ENCODE measurements at regions of chr2 and their contacts with region 1.

Region 1: GRCh38 chr2:69816923-69817542 is 12.4 kb upstream of the GMCL1 start:
- DNase-seq: peak; percentile 41
- H3K4me3 ChIP-seq: no peak overlapping the region
- CTCF ChIP-seq: peak; percentile 61

Region 2: DNA sequence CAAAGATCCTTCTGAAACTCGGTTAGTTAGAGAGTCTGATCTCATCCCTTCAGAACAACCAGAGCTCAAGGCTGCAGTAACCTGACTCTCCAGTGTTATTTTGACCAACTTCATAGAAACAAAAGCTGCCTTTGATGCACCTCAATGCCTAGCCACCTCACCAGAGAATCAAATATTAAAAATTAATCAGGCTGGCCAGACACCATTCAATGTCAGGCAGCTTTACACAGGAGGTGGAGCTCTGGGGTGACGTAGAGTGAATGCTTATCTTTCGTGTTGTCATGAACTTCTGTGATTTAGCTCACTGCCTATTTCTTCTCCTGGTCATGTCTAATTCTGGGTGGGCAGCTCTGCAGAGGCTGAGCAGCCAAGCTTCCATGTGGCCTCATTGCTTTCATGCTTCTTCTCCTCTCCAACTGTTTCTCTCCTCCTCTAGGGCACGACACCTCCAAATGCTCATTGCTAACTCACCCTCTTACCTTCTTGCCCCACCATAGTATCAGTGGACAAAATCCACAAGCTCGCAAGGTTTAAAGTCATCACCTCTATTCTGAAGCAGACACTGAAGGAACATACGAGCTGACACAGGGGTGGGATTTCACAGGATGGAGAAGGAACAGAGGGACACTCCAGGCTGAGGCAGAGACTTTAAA is 212.9 kb before region 1 on chr2:
- CTCF ChIA-PET with region 1: no interaction called
- POLR2A ChIA-PET with region 1: no interaction called
- DNase-seq: no peak
- H3K4me3 ChIP-seq: no peak overlapping the region
- CTCF ChIP-seq: no peak

Region 3: DNA sequence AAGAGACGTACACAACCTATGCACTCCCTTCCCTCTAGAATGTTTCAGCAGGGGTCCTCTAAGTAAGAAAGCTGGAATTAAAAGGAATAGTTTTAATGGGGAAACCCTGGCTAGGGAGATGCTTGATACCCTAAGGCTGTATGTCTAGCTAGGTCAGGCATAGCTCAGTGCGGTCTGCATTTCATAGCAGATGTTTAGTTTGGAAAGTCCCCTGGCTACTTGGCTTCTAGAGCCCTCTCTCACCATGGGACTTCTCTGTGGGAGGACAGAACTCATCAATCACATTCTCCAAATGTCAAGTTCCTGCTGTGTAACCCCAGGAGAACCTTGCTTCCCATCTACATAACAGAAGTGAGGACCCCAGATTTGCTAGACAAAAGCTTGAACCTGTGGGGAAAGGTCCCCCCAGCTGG is 99.2 kb before region 1 on chr2:
- CTCF ChIA-PET with region 1: interaction called, 788 read pairs
- POLR2A ChIA-PET with region 1: no interaction called
- DNase-seq: no peak
- H3K4me3 ChIP-seq: no peak overlapping the region
- CTCF ChIP-seq: no peak

Region 4: DNA sequence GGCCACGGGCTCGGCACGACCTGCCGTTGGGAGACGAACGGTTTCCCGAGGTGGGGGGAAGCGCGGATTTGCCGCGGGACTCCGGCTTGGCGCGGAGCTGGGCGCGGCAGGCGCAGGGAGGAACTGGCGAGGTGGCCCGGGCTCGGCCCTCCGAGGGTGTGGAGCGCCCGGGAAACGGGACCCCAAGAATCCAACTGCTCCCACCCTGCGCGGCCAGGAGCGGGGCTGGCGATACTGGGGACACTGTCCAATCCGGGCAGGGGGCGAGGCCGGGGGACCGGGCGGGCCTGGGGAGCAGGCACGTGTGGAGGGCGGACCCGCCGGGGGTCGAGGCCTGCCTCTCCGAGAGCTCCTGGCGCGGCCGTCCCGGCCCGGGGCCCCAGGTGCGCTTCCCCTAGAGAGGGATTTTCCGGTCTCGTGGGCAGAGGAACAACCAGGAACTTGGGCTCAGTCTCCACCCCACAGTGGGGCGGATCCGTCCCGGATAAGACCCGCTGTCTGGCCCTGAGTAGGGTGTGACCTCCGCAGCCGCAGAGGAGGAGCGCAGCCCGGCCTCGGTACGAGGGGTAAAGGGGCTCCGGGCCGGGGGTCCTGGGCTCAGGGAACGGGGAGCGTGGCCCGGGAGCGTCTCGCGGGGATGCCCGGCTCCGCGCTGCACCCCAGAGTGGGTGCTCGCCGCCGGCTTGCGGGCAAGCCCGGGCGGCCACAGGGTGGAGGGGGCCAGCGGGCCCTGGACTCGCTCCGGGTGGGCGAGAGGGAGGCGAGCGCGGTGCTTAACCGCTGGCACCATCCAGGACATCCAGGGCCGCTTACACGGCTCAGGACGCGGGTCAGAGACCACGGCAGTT is 75.2 kb before region 1 on chr2 and contains the start of gene ANXA4:
- CTCF ChIA-PET with region 1: interaction called, 82 read pairs
- POLR2A ChIA-PET with region 1: no interaction called
- DNase-seq: no peak
- H3K4me3 ChIP-seq: peak within 1 kb of the TSS; percentile 74
- CTCF ChIP-seq: no peak

Region 5: GRCh38 chr2:69770193-69771146 is 46.6 kb before region 1 on chr2:
- CTCF ChIA-PET with region 1: interaction called, 29 read pairs
- POLR2A ChIA-PET with region 1: no interaction called
- DNase-seq: no peak
- H3K4me3 ChIP-seq: no peak overlapping the region
- CTCF ChIP-seq: no peak

Region 6: GRCh38 chr2:69798909-69799526 is 18.0 kb before region 1 on chr2:
- CTCF ChIA-PET with region 1: interaction called, 118 read pairs
- POLR2A ChIA-PET with region 1: no interaction called
- DNase-seq: no peak
- H3K4me3 ChIP-seq: 0 out of 2 replicates have a peak overlapping the region, but pooled peaks have one; percentile 33
- CTCF ChIP-seq: no peak